ENCODE measurements at regions of chr7 and their contacts with region 1.

Region 1: DNA sequence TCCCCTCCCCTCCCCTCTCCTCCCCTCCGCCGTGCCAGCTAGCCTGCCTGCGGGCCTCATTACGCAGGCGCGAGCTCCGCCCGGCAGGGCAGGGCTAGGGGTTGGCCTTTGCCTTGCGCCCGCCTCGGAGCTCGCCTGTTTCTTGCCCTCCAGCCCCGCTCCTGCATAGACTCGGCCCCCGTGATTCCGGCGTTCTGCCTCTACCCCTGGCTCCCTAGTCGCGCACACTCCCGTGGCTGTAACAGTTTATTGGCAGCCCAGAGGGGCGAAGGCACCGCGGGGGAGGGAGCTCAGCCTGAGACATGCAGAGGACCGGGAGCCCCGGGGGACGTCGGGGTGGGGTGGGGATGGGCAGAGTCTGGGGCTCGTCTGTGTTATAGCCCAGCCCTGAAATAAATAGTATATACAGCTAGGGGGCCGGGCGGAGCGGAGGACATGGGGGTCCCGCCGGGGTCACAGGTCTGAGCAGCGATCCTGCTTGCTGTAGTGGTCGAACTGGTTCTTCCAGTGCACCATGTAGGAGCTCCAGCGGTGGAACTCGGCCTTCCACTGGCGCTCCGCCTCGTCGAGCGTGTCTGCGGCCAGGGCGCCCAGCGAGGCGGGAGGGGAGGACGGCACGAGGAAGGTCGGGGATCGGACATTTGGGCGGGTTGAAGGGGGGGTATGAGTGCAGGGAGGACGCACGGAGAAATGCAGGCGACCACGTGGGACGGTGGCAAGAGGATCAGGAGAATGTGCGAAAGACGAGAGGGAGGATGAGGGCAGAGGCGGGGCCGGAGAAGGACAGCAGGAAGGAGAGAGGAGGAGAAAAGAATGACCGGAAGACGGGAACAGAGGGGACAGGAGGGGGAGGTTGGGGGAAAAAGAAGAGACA is 483 bp upstream of the UFSP1 start:
- DNase-seq: no peak
- ATAC-seq: peak; percentile 87
- H3K4me3 ChIP-seq: peak overlapping the region; percentile 62 to 72
- H3K27ac ChIP-seq: peak overlapping the region; percentile 87
- H3K4me1 ChIP-seq: peaks cover 42% of the 10 kb centered on the region
- H3K27me3 ChIP-seq: no peaks in the 10 kb centered on the region
- CTCF ChIP-seq: no peak

Region 2: GRCh38 chr7:100874577-100875355 is 15.2 kb before region 1 on chr7 and contains the start of gene SRRT:
- CTCF ChIA-PET with region 1: no interaction called
- POLR2A ChIA-PET with region 1: interaction called, 10 read pairs
- in situ Hi-C with region 1: no loop called
- intact Hi-C with region 1: no loop called
- DNase-seq: peak; percentile 96
- ATAC-seq: peak; percentile 97
- H3K4me3 ChIP-seq: peak within 1 kb of the TSS; percentile 86 to 98
- H3K27ac ChIP-seq: peak within 1 kb of the TSS; percentile 98
- H3K4me1 ChIP-seq: peaks cover 8% of the 10 kb centered on the region
- H3K27me3 ChIP-seq: no peaks in the 10 kb centered on the region
- CTCF ChIP-seq: no peak
- total RNA-seq, gene SRRT: 248 TPM

Region 3: DNA sequence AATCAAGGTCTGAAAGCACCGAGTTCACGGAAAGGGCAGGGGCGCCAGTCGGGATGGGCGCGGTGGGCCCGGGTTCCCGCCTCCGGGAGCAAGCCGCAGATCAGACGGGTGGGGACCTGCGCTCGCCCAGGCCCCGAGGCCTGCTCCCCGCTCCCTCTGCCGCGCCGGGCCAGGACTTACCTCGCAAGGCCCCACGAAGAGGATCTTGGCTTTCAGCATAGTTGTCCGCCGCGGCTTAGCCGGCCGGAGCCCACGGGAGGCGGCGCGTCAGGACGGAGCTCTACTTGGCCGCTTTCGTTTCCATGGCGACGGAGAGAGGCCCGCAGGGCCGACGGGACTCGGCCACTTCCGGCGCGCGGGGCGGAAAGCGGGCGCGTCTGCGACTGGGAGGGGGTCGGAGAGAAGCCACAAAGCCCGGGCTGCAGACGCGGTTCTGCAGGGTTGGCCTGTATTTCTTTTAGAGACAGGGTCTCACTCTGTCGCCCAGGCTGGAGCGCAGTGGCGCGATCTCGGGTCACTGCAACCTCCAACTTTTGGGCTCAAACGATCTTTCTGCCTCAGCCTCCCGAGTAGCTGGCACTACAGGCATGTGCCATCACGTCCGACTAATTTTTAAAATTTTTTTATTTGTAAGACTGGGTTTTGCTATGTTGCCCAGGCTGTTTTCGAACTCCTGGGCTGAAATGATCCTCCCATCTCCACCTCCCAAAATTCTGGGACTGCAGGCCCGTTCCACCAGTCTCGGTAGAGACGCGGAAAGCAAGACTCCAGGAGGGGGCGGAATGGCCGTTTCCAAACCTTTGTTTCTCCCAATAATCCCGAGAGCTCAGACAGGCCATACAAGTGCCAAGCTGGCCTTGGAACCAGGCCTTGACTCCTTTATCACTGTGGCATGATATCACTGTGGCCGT is 431.7 kb after region 1 on chr7 and contains the start of gene IFT22:
- CTCF ChIA-PET with region 1: no interaction called
- POLR2A ChIA-PET with region 1: interaction called, 11 read pairs
- in situ Hi-C with region 1: no loop called
- intact Hi-C with region 1: no loop called
- DNase-seq: peak; percentile 42
- ATAC-seq: peak; percentile 99
- H3K4me3 ChIP-seq: peak within 1 kb of the TSS; percentile 80 to 86
- H3K27ac ChIP-seq: peak within 1 kb of the TSS; percentile 71
- H3K4me1 ChIP-seq: no peaks in the 10 kb centered on the region
- H3K27me3 ChIP-seq: no peaks in the 10 kb centered on the region
- CTCF ChIP-seq: no peak; the same call in 1 of the 2 replicates
- total RNA-seq, gene IFT22: 42.4 TPM